GM12878 (cell line): ENCODE measurements at regions of chr7 and their contacts with region 1.

Region 1: GRCh38 chr7:87152107-87152844 is at the start of gene DMTF1:
- DNase-seq: peak; percentile 53
- ATAC-seq: peak; percentile 83
- H3K4me3 ChIP-seq: peak within 1 kb of the TSS; percentile 91
- H3K27ac ChIP-seq: peak within 1 kb of the TSS; percentile 99
- H3K4me1 ChIP-seq: no peaks in the 10 kb centered on the region
- H3K27me3 ChIP-seq: no peaks in the 10 kb centered on the region
- CTCF ChIP-seq: no peak
- EP300 ChIP-seq: peak in 1 of 2 experiments; percentile 48; a peak in 1 of 4 replicates
- POLR2A ChIP-seq: peak; percentile 96
- RAD21 ChIP-seq: no peak
- polyA plus RNA-seq, gene DMTF1: 24.3 to 28.4 TPM

Region 2: DNA sequence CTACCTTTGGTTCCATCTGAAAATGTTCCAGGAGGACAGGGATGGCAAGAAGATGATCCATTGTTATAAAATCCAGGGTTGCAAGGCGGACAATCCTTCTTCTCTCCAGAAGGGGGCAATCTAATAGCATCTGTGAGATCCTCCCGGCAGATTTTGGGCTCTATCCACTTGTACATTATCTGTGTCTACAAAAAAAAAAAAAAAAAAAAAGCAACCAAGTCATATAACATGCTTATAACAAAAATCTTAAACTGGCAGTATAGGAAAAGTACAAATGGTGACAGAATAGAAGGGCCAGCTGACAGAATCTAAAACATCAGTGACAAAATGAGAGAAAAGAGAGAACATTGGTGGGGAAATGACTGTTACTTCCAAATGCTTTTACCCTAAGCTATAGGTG is 225.5 kb before region 1 on chr7:
- CTCF ChIA-PET with region 1: interaction called, 42 read pairs
- POLR2A ChIA-PET with region 1: no interaction called
- RAD21 ChIA-PET with region 1: interaction called, 11 read pairs
- SMC1A ChIA-PET with region 1: interaction called, 20 read pairs
- in situ Hi-C with region 1: no loop called
- intact Hi-C with region 1: loop called (anchors 1 kb)
- DNase-seq: no peak
- ATAC-seq: peak; percentile 80
- H3K4me3 ChIP-seq: no peak overlapping the region
- H3K27ac ChIP-seq: no peak overlapping the region
- H3K4me1 ChIP-seq: peaks cover 10% of the 10 kb centered on the region
- H3K27me3 ChIP-seq: no peaks in the 10 kb centered on the region
- CTCF ChIP-seq: peak; percentile 67 to 72 (median 70)
- EP300 ChIP-seq: no peak
- POLR2A ChIP-seq: no peak
- RAD21 ChIP-seq: peak; percentile 84

Region 3: DNA sequence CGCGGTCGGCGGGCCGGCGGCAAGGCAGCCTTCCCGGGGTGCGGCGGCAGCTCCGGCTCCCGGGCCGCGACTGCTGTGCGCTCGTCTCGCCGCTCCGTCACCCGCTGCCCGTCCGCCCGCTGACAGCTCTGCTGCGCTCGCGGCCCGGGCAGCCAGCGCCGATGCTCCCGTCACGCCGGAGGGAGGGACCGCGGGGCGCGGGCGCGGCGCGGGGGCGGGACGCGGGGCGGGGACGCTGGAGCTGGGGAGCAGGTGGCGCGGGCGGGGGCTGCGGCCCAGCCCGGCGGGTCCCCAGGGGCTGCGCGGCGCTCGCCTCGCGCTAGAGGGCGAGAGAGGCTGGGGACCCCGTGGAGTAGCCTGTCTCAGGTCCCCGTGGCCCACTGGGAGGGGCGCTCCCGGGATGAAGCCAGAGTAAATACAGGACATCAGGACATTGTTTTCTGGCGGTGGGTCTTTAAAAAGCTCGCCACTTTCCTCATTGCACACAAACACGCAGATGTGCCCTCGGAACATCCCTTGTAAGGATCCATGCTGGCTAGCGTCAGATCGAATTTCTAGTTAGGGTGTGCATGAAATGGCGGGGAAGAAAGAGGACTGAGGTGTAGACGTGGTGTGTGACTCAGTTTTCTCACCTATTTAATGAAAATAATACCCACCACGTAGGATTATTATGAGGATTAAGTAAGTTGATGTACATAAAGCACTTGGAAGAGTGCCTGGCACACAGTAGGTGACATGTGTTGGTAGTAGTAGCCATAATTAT is 92.6 kb before region 1 on chr7 and contains the start of gene ELAPOR2:
- CTCF ChIA-PET with region 1: interaction called, 6 read pairs
- POLR2A ChIA-PET with region 1: no interaction called
- RAD21 ChIA-PET with region 1: no interaction called
- SMC1A ChIA-PET with region 1: interaction called, 3 read pairs
- in situ Hi-C with region 1: loop called (anchors 5 kb)
- intact Hi-C with region 1: no loop called
- DNase-seq: peak; percentile 8
- ATAC-seq: peak; percentile 97
- H3K4me3 ChIP-seq: peak within 1 kb of the TSS; percentile 78
- H3K27ac ChIP-seq: peak within 1 kb of the TSS; percentile 27; the same call in 1 of the 2 replicates
- H3K4me1 ChIP-seq: no peaks in the 10 kb centered on the region
- H3K27me3 ChIP-seq: no peaks in the 10 kb centered on the region; a peak in 1 of 4 replicates
- CTCF ChIP-seq: peak; percentile 49 to 61 (median 55)
- EP300 ChIP-seq: no peak
- POLR2A ChIP-seq: peak; percentile 78
- RAD21 ChIP-seq: peak; percentile 64
- polyA plus RNA-seq, gene ELAPOR2: 1.3 to 2.3 TPM

Region 4: GRCh38 chr7:87199700-87200450 is 47.6 kb after region 1 on chr7:
- CTCF ChIA-PET with region 1: no interaction called
- POLR2A ChIA-PET with region 1: interaction called, 4 read pairs
- RAD21 ChIA-PET with region 1: interaction called, 5 read pairs
- SMC1A ChIA-PET with region 1: interaction called, 10 read pairs
- in situ Hi-C with region 1: no loop called
- intact Hi-C with region 1: no loop called
- DNase-seq: no peak
- ATAC-seq: peak; percentile 21
- H3K4me3 ChIP-seq: no peak overlapping the region
- H3K27ac ChIP-seq: no peak overlapping the region; the same call in 1 of the 2 replicates
- H3K4me1 ChIP-seq: peaks cover 8% of the 10 kb centered on the region
- H3K27me3 ChIP-seq: no peaks in the 10 kb centered on the region
- CTCF ChIP-seq: no peak
- EP300 ChIP-seq: no peak
- POLR2A ChIP-seq: peak; percentile 52; the same call in 1 of the 2 replicates
- RAD21 ChIP-seq: no peak

Region 5: DNA sequence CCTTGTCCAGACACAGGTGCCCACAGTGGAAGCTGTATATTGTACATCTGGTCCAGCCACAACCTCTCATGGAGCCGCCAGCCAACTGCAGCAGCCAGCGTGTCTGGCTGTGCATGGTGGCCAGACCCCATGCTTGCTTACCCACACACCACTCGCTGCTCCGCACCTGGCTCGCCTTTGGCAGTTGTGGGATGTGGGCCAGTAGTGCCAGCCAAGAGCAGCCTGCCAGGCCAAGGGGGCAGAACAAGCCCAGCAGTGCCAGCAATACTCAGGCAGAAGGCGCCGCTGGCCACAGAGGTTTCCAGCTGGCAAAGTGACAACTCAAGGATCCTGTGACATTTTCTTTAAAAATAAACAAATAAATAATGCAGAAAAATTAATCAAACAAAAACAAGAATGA is 79.0 kb after region 1 on chr7:
- CTCF ChIA-PET with region 1: interaction called, 21 read pairs
- POLR2A ChIA-PET with region 1: no interaction called
- RAD21 ChIA-PET with region 1: interaction called, 3 read pairs
- SMC1A ChIA-PET with region 1: interaction called, 6 read pairs
- in situ Hi-C with region 1: no loop called
- intact Hi-C with region 1: no loop called
- DNase-seq: no peak
- ATAC-seq: no peak
- H3K4me3 ChIP-seq: no peak overlapping the region
- H3K27ac ChIP-seq: no peak overlapping the region
- H3K4me1 ChIP-seq: no peaks in the 10 kb centered on the region
- H3K27me3 ChIP-seq: no peaks in the 10 kb centered on the region
- CTCF ChIP-seq: no peak
- EP300 ChIP-seq: no peak
- POLR2A ChIP-seq: no peak
- RAD21 ChIP-seq: no peak

Region 6: DNA sequence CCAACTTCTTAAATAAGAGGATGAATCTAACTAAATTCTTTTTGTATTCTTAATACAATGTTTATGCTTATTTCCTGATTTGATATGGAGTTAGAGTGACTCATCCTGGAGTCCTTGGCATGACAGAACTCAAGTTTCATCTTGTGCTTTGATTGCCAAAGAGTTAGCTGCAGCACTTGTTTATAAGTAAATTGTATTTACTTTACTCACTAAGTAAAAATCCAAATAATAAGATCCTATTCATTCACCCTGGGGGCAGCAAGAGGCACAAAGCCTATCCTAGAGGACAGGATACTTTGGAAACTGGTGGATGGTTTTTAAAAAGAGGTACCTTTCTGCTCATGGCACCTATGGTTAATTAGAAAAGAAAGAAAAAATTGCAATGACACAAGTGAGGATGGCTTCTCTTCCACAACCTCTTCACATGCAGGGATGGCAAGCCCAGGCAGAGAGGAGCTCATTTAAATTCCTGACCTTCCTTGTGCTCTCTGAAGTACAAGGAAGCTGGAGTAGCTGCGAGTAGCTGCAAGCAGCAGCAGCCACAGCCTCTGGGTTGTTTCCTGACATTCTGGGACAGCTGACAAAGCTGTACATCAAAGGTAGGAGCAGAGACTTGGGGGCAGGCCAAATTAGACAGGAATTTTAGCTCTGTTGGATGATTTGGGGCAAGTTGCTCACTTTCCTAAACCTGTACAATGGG is 164.7 kb after region 1 on chr7:
- CTCF ChIA-PET with region 1: no interaction called
- POLR2A ChIA-PET with region 1: no interaction called
- RAD21 ChIA-PET with region 1: no interaction called
- SMC1A ChIA-PET with region 1: no interaction called
- in situ Hi-C with region 1: no loop called
- intact Hi-C with region 1: no loop called
- DNase-seq: no peak
- ATAC-seq: 0 out of 3 replicates have a peak, but pooled peaks have one; percentile 13
- H3K4me3 ChIP-seq: no peak overlapping the region
- H3K27ac ChIP-seq: no peak overlapping the region
- H3K4me1 ChIP-seq: peaks cover 8% of the 10 kb centered on the region
- H3K27me3 ChIP-seq: no peaks in the 10 kb centered on the region
- CTCF ChIP-seq: no peak
- EP300 ChIP-seq: no peak
- POLR2A ChIP-seq: no peak
- RAD21 ChIP-seq: no peak

Region 7: GRCh38 chr7:87876040-87876868 is 724.0 kb after region 1 on chr7 and contains the starts of genes DBF4 and SLC25A40:
- CTCF ChIA-PET with region 1: no interaction called
- POLR2A ChIA-PET with region 1: no interaction called
- RAD21 ChIA-PET with region 1: no interaction called
- SMC1A ChIA-PET with region 1: no interaction called
- in situ Hi-C with region 1: no loop called
- intact Hi-C with region 1: loop called (anchors 10 kb)
- DNase-seq: peak; percentile 86
- ATAC-seq: peak; percentile 86
- H3K4me3 ChIP-seq: peak within 1 kb of the TSS; percentile 88
- H3K27ac ChIP-seq: peak within 1 kb of the TSS; percentile 92
- H3K4me1 ChIP-seq: no peaks in the 10 kb centered on the region
- H3K27me3 ChIP-seq: no peaks in the 10 kb centered on the region
- CTCF ChIP-seq: no peak
- EP300 ChIP-seq: peak in 1 of 2 experiments; percentile 34; a peak in 1 of 4 replicates
- POLR2A ChIP-seq: peak; percentile 91
- RAD21 ChIP-seq: no peak
- polyA plus RNA-seq, gene DBF4: 46.1 to 47.0 TPM
- polyA plus RNA-seq, gene SLC25A40: 15.8 to 17.4 TPM